GM10248 (cell line): ENCODE measurements at regions of chr19 and their contacts with region 1.

Region 1: DNA sequence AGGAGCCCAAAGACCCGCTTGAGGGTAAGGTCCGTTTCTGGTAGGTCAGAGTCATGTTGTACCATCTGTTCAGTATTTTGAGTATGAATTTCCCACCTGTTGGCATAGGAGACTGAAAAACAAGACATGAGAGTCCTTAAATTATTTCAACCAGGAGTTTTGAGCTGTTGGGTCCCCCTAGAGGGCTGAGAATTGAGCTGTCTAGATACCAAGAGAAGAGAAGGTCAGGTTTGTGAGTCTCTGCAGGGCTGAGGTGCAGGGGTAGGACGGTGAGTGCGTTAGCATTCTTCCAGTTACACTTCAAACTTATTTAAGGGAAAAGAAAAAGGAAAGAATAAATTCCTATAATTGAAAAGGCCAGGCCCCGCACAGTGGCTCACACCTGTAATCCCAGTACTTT is 5.0 kb downstream of the CBLC start:
- DNase-seq: no peak
- CTCF ChIP-seq: no peak

Region 2: DNA sequence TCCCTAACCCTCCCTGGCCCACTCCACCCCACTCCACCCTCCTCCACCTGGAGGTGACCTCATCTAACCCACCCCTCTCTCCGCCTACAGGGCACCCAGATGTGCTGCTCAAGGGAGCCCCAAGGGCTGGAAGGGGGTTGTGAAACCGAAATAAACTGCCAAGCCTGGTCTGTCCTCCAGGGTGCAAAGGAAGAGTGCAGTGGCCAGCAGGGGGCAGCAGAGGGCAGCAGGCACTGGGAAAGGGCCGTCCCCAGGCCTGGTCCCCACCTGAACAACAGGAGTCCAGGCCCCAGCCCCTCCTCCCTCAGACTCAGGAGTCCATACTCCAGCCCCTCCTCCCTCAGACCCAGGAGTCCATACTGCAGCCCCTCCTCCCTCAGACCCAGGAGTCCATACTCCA is 17.7 kb after region 1 on chr19:
- CTCF ChIA-PET with region 1: interaction called, 12 read pairs
- POLR2A ChIA-PET with region 1: interaction called, 8 read pairs
- DNase-seq: peak; percentile 92
- CTCF ChIP-seq: peak; percentile 95

Region 3: DNA sequence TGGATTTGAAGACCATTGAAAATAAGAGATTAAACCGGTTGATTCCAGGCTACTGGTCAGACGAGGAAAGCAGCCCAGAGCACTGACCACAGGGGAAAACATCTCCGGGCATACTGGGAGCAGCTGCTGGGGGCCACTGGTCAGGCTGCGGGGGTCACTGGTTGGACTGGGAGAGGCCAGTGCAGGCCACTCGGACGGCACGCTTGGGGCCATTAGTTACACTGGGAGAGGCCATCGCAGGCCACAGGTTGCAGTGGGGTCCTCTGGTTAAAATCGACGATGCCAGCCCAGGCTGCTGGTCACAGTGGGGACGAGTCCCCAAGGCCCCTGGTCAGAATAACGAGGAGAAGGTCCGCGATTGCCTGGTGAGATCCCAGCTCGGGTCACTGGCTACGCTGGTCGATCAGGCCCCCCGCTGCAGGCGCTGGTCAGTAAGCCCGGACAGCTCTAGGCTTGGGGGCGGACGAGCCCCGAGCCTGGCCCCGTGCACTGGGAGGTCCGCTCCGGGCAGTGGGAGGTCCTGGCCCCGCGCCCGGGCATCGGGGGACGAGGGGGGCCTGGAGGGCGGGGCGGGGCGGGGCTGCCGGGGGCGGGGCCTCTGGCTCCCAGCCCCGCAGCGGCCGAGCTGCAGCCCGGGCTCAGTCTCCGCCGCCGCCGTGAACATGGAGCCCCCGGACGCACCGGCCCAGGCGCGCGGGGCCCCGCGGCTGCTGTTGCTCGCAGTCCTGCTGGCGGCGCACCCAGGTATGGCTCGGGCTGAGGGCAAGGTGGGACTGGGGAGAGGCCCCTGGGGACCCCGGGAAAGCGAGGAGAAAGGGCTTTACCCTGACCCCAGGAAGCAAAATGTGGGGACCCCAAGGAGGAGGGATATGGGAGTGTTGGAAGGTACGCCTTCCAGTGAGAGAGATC is 26.0 kb after region 1 on chr19 and contains the start of gene BCAM:
- CTCF ChIA-PET with region 1: interaction called, 10 read pairs
- POLR2A ChIA-PET with region 1: no interaction called
- DNase-seq: peak; percentile 57
- CTCF ChIP-seq: no peak

Region 4: DNA sequence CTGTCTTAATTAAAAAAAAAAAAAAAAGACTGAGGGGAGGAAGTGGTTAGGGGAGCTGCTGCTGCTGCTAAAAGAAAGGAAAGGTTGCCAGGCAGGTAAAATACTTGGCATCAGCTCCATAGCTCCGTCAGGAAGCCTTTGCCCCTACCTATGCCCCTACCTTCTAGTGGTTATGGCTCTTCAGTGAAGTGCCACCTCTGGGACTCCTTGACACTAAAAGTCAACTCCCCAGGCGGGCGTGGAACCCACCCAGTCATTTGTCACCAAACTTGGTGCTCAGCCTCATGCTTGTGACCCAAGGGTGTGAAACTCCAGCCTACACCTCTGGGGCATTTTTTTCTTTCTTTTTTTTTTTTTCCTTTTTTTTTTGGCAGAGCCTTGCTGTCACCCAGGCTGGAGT is 58.5 kb after region 1 on chr19:
- CTCF ChIA-PET with region 1: interaction called, 21 read pairs
- POLR2A ChIA-PET with region 1: no interaction called
- DNase-seq: peak; percentile 8
- CTCF ChIP-seq: no peak